Cardiac septum (tissue), 1 donor: ENCODE measurements at regions of chr7 and their contacts with region 1.

Region 1: DNA sequence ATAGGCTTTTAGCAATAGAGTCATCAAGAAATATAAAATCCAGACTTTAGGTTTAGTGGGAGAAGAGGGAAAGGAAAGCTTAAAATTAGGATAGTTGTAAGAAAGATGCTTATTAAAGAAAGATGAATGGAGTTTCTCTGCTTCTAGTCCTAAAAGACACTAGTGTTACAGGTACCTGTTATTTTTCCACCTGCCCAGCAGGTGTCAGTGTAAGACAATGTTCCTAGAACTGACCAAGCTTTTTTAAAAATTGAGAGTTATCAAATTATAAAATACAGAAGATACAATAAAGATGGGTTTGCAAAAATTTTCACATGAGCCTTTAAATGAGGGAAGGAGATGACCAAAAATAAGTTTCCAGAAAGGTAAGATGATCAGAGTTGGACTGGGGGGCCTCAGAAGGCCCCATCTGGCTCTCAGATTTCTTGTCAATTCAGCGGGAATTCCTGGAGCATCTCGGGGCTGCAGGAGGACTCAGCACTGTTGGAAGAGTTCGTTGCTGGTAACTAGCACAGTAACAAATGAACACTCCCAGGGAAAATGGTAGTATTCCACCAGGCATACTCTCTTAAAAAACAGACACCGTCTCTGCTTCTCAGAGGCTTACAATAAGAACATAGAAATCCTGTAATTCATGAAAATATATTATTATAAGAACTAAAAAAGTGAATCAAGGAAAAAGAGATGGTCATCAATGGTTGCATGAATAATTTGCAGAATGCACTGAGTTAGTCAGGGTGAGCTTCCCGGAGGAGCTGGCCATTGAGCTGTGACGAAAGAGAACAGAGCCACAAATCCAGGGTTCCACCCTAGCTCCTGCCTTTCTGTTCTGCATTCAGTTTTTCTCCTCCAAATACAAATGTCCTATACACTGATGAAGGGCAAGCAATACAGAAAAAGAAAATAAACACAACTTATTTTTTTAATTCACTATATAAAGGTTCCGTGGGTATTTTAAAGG is 71.8 kb upstream of the PIK3CG start:
- DNase-seq: no peak

Region 2: GRCh38 chr7:106840342-106840741 is 47.0 kb after region 1 on chr7:
- intact Hi-C with region 1: loop called (anchors 5 kb)
- DNase-seq: no peak

Region 3: DNA sequence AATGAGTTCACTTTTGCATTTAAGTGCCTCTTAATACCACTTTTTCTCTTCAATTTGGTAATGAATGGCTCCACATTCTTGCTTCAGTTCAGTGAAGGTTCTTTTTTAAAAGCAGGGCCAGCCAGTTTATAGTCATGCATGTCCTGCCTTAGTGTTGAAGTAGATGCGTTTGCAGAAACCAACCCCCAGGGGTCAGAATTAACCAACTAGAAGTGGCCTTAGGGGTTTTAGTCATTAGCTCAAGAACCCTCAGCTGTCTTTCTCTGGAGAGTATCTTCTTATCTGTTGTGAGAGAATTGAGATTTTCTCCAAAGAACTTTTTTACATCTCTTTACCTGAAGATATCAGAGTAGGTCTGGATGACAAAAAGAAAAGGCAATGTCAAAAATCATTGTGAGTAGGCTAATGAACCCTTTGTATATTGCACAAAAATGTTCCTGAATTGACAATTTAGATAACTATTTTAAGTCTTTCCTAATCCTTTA is 154.0 kb after region 1 on chr7:
- intact Hi-C with region 1: loop called (anchors 10 kb)
- DNase-seq: no peak

Region 4: GRCh38 chr7:107069457-107069856 is 276.2 kb after region 1 on chr7:
- intact Hi-C with region 1: no loop called
- DNase-seq: no peak

Region 5: DNA sequence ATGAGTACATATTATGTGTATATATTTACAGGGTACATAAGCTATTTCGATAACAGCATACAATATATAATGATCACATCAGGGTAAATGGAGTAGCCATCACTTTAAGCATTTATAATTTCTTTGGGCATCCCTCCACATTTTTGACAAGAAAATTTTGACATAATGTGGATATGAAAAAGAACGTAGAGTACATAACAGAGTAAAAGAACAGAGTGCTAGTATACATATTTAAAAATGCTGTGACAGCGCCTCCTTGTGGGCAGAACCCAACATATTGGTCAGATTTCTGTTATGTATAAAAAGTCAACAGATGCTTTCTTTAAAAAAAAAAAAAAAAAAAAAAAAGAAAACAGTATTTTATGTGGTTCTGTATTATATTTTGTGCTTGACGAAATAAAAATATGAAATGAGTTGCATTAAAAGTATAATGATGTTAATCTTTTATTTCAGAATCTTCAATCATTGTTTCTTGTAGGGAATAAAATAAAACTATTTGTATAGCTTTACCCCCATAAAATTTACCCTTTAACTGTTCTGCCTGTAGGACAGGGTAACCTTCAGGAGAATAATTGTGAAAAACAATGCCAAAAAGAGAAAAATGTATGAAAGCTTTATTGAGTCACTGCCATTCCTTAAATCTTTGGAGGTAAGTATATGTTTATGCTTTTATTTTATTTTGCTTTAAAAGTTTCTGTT is 357.2 kb after region 1 on chr7:
- intact Hi-C with region 1: loop called (anchors 5 kb)
- DNase-seq: no peak

Region 6: GRCh38 chr7:107501593-107501992 is 708.3 kb after region 1 on chr7:
- intact Hi-C with region 1: no loop called
- DNase-seq: no peak

Region 7: GRCh38 chr7:107538001-107538400 is 744.7 kb after region 1 on chr7:
- intact Hi-C with region 1: no loop called
- DNase-seq: no peak